ENCODE measurements at regions of chr1 and their contacts with region 1.

Region 1: DNA sequence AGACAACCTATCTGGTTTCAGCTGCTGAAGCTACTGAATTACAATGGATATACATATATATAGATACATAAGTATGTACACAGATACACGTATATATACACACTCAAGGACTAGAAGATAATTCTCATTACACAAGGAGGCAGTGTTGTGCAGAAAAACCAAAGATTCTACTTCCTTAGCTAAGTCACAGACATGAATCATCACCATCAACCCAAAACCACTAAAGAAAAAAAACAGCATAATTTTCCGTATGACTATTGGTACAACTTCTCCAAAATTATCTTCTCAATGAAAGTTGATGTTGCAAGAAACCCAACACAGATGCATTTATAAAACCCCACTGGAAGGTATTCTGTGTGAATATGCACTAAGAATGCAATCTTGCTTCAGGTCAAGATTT is 36.8 kb upstream of the RPF1 start:
- DNase-seq: peak; percentile 89
- H3K4me3 ChIP-seq: no peak overlapping the region
- H3K27ac ChIP-seq: no peak overlapping the region
- H3K4me1 ChIP-seq: peaks cover 2% of the 10 kb centered on the region
- H3K27me3 ChIP-seq: no peaks in the 10 kb centered on the region
- CTCF ChIP-seq: peak; percentile 18 to 26
- POLR2A ChIP-seq: no peak

Region 2: GRCh38 chr1:84425150-84425896 is 16.9 kb before region 1 on chr1:
- CTCF ChIA-PET with region 1: no interaction called
- POLR2A ChIA-PET with region 1: no interaction called
- dilution Hi-C with region 1: no loop called
- intact Hi-C with region 1: no loop called
- DNase-seq: no peak
- H3K4me3 ChIP-seq: no peak overlapping the region
- H3K27ac ChIP-seq: no peak overlapping the region
- H3K4me1 ChIP-seq: peaks cover 4% of the 10 kb centered on the region
- H3K27me3 ChIP-seq: no peaks in the 10 kb centered on the region
- CTCF ChIP-seq: no peak
- POLR2A ChIP-seq: no peak

Region 3: GRCh38 chr1:84541679-84542078 is 99.4 kb after region 1 on chr1:
- CTCF ChIA-PET with region 1: no interaction called
- POLR2A ChIA-PET with region 1: no interaction called
- dilution Hi-C with region 1: no loop called
- intact Hi-C with region 1: loop called (anchors 2 kb)
- DNase-seq: no peak
- H3K4me3 ChIP-seq: no peak overlapping the region
- H3K27ac ChIP-seq: no peak overlapping the region
- H3K4me1 ChIP-seq: no peaks in the 10 kb centered on the region
- H3K27me3 ChIP-seq: no peaks in the 10 kb centered on the region
- CTCF ChIP-seq: no peak
- POLR2A ChIP-seq: no peak

Region 4: DNA sequence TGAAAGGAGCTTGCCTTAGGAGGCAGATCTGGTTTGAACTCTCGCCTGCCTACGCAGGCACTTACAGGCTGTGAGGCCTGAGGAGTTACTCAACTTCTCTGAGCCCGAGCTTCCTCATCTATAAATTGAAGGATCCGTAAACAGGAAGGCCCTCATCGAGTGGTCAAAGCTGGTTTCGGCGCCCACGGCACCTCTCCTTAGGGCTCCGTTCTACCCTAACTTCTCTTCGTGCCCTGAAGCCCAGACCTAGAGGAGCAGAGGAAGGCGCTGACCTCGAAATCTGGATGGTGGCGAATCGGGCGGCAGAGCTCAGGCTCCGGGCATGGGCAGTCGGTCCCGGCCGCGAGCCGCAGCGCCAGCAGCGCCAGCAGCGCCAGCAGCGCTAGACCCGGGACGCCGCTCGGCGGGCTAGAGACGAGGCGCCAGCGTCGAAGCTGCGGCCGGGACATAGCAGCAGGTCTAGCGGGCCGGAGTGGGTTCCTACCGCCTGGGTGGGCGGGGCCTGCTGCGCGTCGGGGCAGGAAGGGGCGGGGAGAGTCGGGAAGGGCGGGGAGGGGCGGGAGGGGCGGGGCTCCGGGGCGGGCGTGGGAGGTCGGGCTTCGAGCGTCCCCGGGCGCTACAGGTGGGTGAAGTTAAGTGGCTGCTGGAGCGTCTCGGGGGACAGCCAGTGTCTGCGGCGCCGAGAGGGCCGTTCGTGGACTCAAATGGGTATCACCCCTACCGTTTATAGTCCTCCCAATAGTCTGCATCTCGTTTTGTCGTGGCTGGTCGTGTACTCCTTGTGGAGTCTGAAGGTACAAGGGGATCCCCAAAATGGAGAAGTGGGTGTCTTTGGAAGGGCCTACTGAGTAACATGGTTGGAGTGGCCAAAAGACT is 131.9 kb after region 1 on chr1 and contains the start of gene CTBS:
- CTCF ChIA-PET with region 1: interaction called, 10 read pairs
- POLR2A ChIA-PET with region 1: no interaction called
- dilution Hi-C with region 1: no loop called
- intact Hi-C with region 1: no loop called
- DNase-seq: peak; percentile 85
- H3K4me3 ChIP-seq: peak within 1 kb of the TSS; percentile 40 to 69 (median 62)
- H3K27ac ChIP-seq: peak within 1 kb of the TSS; percentile 98
- H3K4me1 ChIP-seq: peaks cover 17% of the 10 kb centered on the region
- H3K27me3 ChIP-seq: no peaks in the 10 kb centered on the region
- CTCF ChIP-seq: no peak
- POLR2A ChIP-seq: peak; percentile 86
- total RNA-seq, gene CTBS: 10.7 and 14.3 TPM in 2 replicates

Region 5: GRCh38 chr1:84598846-84599741 is 156.8 kb after region 1 on chr1:
- CTCF ChIA-PET with region 1: interaction called, 124 read pairs
- POLR2A ChIA-PET with region 1: no interaction called
- dilution Hi-C with region 1: loop called (anchors 25 kb)
- intact Hi-C with region 1: loop called (anchors 1 kb)
- DNase-seq: peak; percentile 93
- H3K4me3 ChIP-seq: peak overlapping the region in 1 of 3 experiments; percentile 7
- H3K27ac ChIP-seq: peak overlapping the region; percentile 96
- H3K4me1 ChIP-seq: peaks cover 36% of the 10 kb centered on the region
- H3K27me3 ChIP-seq: no peaks in the 10 kb centered on the region
- CTCF ChIP-seq: no peak
- POLR2A ChIP-seq: no peak

Region 6: DNA sequence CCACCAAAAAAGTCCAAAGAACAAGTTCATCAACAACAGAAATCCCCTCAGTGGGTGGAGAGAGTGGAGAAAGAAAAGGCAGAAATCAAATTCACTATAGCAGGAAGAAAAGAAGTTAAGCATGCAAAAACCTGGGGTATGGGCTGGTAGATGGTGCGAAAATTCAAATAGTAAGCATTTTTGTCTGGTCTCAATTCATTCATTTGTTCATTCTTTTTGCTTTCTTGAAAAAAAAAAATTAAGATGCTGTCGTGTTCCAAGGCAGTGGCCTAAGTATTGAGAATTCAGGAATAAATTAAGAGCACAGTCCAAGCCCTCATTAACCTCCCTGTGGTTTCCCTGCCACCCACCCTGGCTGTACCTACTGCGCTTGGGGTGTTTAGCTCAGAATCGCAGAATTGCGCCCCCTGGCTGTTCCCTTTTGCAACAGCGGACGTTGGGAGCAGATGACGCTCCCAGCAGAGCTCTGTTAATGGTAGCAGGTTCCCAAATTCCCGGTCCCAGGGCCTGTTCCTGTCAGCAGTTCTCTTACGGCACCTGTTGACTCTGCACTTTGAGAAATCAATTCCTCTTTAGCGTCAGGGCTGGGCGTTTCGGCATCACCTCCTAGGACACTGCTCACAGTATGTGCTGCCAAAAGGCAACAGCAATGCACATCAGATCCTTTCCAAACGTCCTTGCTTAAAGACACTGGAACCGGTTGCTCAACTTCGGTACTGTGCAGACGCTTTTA is 282.0 kb after region 1 on chr1:
- CTCF ChIA-PET with region 1: interaction called, 20 read pairs
- POLR2A ChIA-PET with region 1: no interaction called
- dilution Hi-C with region 1: no loop called
- intact Hi-C with region 1: no loop called
- DNase-seq: no peak
- H3K4me3 ChIP-seq: no peak overlapping the region
- H3K27ac ChIP-seq: no peak overlapping the region
- H3K4me1 ChIP-seq: no peaks in the 10 kb centered on the region
- H3K27me3 ChIP-seq: peaks cover 0 to 2% of the 10 kb centered on the region in 2 experiments
- CTCF ChIP-seq: peak; percentile 49 to 50
- POLR2A ChIP-seq: no peak

Region 7: GRCh38 chr1:84753516-84754385 is 311.5 kb after region 1 on chr1:
- CTCF ChIA-PET with region 1: interaction called, 76 read pairs
- POLR2A ChIA-PET with region 1: no interaction called
- dilution Hi-C with region 1: no loop called
- intact Hi-C with region 1: loop called (anchors 1 kb)
- DNase-seq: peak; percentile 71
- H3K4me3 ChIP-seq: no peak overlapping the region
- H3K27ac ChIP-seq: no peak overlapping the region
- H3K4me1 ChIP-seq: no peaks in the 10 kb centered on the region
- H3K27me3 ChIP-seq: peaks cover 8 to 12% of the 10 kb centered on the region in 2 experiments
- CTCF ChIP-seq: peak; percentile 90 to 93
- POLR2A ChIP-seq: no peak

Region 8: DNA sequence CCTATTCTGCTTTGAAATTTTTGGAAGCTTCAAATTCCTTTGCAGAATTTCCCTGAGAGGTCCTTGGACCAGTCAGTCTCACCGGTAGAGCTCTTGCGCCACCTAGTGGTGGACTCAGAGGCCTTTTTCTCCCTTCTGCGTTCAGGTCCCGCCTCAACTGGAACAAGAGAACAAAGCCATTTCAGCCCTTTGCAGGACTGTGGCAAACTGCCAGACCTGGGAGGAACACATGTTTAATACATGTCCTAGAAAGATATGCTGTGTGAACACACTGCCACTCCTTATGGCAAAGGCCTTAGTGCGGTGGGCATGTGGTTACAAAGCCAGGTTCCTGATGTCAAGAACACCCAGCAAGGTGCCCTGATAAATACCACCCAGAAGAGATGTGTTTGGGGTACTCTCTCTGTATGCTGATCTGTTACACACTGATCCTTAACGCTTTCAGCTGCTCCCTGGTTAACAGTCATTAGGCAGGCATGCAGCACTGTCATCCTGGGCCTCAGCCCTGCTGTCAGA is 330.2 kb after region 1 on chr1:
- CTCF ChIA-PET with region 1: interaction called, 34 read pairs
- POLR2A ChIA-PET with region 1: no interaction called
- dilution Hi-C with region 1: no loop called
- intact Hi-C with region 1: loop called (anchors 1 kb)
- DNase-seq: peak; percentile 74
- H3K4me3 ChIP-seq: no peak overlapping the region
- H3K27ac ChIP-seq: no peak overlapping the region
- H3K4me1 ChIP-seq: no peaks in the 10 kb centered on the region
- H3K27me3 ChIP-seq: peaks cover 2 to 12% of the 10 kb centered on the region in 2 experiments
- CTCF ChIP-seq: peak; percentile 83 to 87
- POLR2A ChIP-seq: no peak